CD4-positive, alpha-beta T cell (primary cell): ENCODE measurements at regions of chr7 and their contacts with region 1.

Region 1: DNA sequence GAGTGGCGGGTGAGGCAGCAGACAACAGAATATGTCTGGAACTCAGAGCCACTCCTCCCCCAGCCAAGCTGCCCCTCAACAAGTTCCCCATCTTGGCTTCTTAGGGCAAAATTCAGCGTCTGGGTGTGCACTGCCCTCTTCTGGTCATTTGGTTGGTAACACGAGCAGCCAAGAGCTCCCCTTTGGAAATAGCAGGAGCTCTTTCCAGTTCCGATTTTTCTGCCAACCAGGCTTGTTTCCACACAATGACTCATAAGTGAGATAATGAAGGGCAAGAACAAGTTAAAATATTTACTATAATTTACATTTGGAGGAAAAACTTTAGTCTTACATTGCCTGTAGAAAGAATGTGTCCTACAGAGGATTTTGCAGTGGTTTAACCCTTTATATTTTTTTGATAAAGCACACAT is 70.5 kb downstream of the ADCYAP1R1 start:
- DNase-seq: peak in 7 of 14 experiments; percentile 11 to 64 (median 32)
- ATAC-seq: no peak
- H3K4me3 ChIP-seq: no peak overlapping the region
- H3K4me3 Mint-ChIP-seq: no peak overlapping the region
- H3K27ac ChIP-seq: no peak overlapping the region
- H3K27ac Mint-ChIP-seq: no peak overlapping the region
- H3K4me1 ChIP-seq: no peaks in the 10 kb centered on the region
- H3K4me1 Mint-ChIP-seq: no peaks in the 10 kb centered on the region
- H3K27me3 ChIP-seq: peaks cover 3 to 6% of the 10 kb centered on the region in 2 experiments
- H3K27me3 Mint-ChIP-seq: peaks cover 26% of the 10 kb centered on the region
- CTCF ChIP-seq: peak; percentile 44

Region 2: DNA sequence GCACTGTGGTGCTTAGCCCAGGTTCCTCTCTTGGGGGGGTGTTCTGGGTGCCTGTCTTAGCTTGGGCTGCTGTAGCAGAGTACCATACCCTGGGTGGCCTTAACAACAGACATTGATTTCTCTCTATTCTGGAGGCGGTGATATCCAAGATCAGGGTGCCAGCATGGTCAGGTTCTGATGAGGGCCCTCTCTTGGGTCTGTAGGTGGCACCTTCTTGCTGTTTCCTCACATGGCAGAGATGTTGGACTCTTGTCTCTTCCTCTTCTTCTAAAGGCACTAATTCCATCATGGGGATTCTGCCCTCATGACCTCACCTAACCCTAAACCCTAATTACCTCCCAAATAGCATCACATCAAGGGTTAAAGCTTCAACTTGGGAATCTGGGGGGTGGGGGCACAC is 420.5 kb before region 1 on chr7:
- CTCF ChIA-PET with region 1: no interaction called
- POLR2A ChIA-PET with region 1: no interaction called
- intact Hi-C with region 1: no loop called
- DNase-seq: peak in 5 of 14 experiments; percentile 30 to 66 (median 49)
- ATAC-seq: no peak
- H3K4me3 ChIP-seq: no peak overlapping the region
- H3K4me3 Mint-ChIP-seq: no peak overlapping the region
- H3K27ac ChIP-seq: no peak overlapping the region
- H3K27ac Mint-ChIP-seq: no peak overlapping the region
- H3K4me1 ChIP-seq: peaks cover 12% of the 10 kb centered on the region
- H3K4me1 Mint-ChIP-seq: peaks cover 6% of the 10 kb centered on the region
- H3K27me3 ChIP-seq: no peaks in the 10 kb centered on the region
- H3K27me3 Mint-ChIP-seq: no peaks in the 10 kb centered on the region
- CTCF ChIP-seq: peak; percentile 20

Region 3: GRCh38 chr7:30800785-30801252 is 321.8 kb before region 1 on chr7:
- CTCF ChIA-PET with region 1: no interaction called
- POLR2A ChIA-PET with region 1: no interaction called
- intact Hi-C with region 1: loop called in 1 of 2 experiments (anchors 1 kb)
- DNase-seq: peak in 9 of 14 experiments; percentile 6 to 66 (median 20)
- ATAC-seq: no peak
- H3K4me3 ChIP-seq: no peak overlapping the region
- H3K4me3 Mint-ChIP-seq: no peak overlapping the region
- H3K27ac ChIP-seq: no peak overlapping the region
- H3K27ac Mint-ChIP-seq: no peak overlapping the region
- H3K4me1 ChIP-seq: peaks cover 3% of the 10 kb centered on the region
- H3K4me1 Mint-ChIP-seq: peaks cover 13% of the 10 kb centered on the region
- H3K27me3 ChIP-seq: no peaks in the 10 kb centered on the region
- H3K27me3 Mint-ChIP-seq: no peaks in the 10 kb centered on the region
- CTCF ChIP-seq: peak; percentile 54

Region 4: DNA sequence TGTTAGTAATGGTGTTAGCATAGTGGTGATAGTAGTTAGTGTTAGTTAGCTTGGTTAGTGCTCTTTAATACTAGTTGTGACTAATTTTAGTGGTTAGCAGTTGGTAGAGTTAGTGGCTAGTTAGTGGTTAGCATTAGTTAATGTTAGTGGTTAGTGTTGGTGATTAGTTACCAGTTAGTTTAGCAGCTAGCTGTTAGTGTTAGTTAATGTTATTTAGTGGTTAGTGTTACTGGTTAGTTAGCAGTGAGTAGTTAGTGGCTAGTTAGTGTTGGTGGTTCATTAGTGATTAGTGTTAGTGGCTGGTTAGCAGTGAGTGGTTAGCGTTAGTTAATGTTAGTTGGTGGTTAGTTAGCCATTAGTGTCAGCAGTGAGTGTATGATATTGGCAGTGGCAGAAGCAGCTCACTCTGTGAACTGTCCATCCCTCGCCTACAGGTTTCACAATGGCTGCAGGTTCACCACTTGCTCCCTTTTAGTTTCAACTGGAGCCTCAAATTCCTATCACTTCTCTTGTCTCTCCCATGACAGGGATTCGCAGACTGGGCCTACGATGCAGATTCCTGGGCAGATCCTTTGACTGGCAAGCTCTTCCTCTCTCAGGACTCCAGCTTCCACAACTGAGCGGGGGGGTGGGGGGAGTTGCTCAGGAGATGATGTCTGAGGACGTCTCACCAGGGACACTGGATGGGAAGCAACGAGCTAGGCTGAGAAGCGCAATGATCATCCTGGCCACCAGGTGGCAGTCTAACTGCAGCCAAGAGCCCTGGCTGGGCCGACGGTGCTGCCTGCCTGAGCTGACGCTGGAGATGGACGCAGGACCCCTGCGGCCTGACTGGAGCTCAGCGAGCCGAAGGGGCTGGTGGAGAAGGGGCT is 139.4 kb before region 1 on chr7:
- CTCF ChIA-PET with region 1: interaction called, 6 read pairs
- POLR2A ChIA-PET with region 1: interaction called, 5 read pairs
- intact Hi-C with region 1: loop called (anchors 1 to 5 kb)
- DNase-seq: peak; percentile 53 to 81 (median 65)
- ATAC-seq: peak; percentile 65
- H3K4me3 ChIP-seq: no peak overlapping the region
- H3K4me3 Mint-ChIP-seq: peak overlapping the region; percentile 57
- H3K27ac ChIP-seq: no peak overlapping the region
- H3K27ac Mint-ChIP-seq: no peak overlapping the region
- H3K4me1 ChIP-seq: peaks cover 17% of the 10 kb centered on the region
- H3K4me1 Mint-ChIP-seq: peaks cover 6% of the 10 kb centered on the region
- H3K27me3 ChIP-seq: peaks cover 8 to 14% of the 10 kb centered on the region in 2 experiments
- H3K27me3 Mint-ChIP-seq: peaks cover 61% of the 10 kb centered on the region
- CTCF ChIP-seq: peak; percentile 94

Region 5: DNA sequence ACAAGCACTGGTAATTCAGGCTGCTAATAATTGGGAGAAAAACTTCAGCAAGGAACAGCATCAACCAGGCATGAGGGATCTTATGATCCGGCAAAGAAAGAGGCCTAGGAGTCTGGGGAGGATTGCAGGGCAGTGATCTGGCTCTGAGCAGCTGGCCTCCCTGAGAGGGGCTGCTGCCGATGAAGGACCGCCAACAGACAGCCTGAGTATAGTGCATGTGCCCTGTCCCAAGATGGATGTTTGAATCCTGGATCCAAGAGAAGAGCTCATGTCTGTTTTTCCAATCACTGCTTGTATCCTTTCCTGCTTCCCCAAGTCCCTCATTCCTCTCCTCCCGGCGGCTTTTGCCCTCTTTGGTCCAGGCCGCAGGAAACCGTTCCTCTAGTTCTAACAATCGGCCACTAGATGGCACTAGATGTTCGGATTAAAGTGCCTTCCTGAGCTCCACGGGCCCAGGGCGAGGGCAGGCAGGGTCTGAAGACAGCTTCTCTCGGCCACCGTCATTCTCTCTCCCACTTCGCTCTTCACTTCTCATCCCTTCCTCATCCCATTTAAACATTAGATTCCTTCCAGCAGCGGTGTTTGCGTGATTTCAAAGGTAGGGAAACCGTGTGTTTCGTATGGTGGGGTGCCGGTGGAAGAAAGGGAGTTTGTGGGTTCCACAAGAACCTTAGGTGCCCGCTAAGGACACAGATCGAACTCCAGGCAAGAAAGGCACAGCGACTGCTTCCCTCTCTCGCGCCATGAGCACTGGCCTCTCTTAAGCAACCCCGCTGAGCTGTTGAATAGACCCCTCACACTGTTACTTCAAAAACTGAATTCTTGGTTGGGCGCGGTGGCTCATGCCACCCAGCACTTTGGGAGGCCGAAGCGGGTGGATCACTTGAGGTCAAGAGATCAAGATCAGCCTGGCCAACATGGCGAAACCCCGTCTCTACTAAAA is 11.9 kb after region 1 on chr7:
- CTCF ChIA-PET with region 1: interaction called, 12 read pairs
- POLR2A ChIA-PET with region 1: no interaction called
- intact Hi-C with region 1: no loop called
- DNase-seq: peak in 11 of 14 experiments; percentile 10 to 63 (median 24)
- ATAC-seq: peak; percentile 41
- H3K4me3 ChIP-seq: no peak overlapping the region
- H3K4me3 Mint-ChIP-seq: no peak overlapping the region
- H3K27ac ChIP-seq: no peak overlapping the region
- H3K27ac Mint-ChIP-seq: no peak overlapping the region
- H3K4me1 ChIP-seq: no peaks in the 10 kb centered on the region
- H3K4me1 Mint-ChIP-seq: no peaks in the 10 kb centered on the region
- H3K27me3 ChIP-seq: no peaks in the 10 kb centered on the region
- H3K27me3 Mint-ChIP-seq: no peaks in the 10 kb centered on the region
- CTCF ChIP-seq: peak; percentile 67